Activated CD4-positive, alpha-beta T cell treated with anti-CD3 and anti-CD28 coated beads for 36 hours (primary cell): ENCODE measurements at regions of chr1 and their contacts with region 1.

Region 1: GRCh38 chr1:32107742-32108661 is at the start of gene KPNA6:
- DNase-seq: peak; percentile 94
- ATAC-seq: peak; percentile 77
- H3K4me3 Mint-ChIP-seq: peak within 1 kb of the TSS; percentile 88
- H3K27ac Mint-ChIP-seq: peak within 1 kb of the TSS; percentile 96
- H3K4me1 Mint-ChIP-seq: peaks cover 39% of the 10 kb centered on the region
- H3K27me3 Mint-ChIP-seq: no peaks in the 10 kb centered on the region
- total RNA-seq, gene KPNA6: 70.0 to 78.3 TPM

Region 2: GRCh38 chr1:32040711-32041110 is 67.3 kb before region 1 on chr1:
- CTCF ChIA-PET with region 1: interaction called, 3 read pairs
- POLR2A ChIA-PET with region 1: no interaction called
- intact Hi-C with region 1: loop called in 1 of 2 experiments (anchors 10 kb)
- DNase-seq: no peak
- ATAC-seq: no peak
- H3K4me3 Mint-ChIP-seq: no peak overlapping the region
- H3K27ac Mint-ChIP-seq: no peak overlapping the region
- H3K4me1 Mint-ChIP-seq: peaks cover 2% of the 10 kb centered on the region
- H3K27me3 Mint-ChIP-seq: no peaks in the 10 kb centered on the region

Region 3: DNA sequence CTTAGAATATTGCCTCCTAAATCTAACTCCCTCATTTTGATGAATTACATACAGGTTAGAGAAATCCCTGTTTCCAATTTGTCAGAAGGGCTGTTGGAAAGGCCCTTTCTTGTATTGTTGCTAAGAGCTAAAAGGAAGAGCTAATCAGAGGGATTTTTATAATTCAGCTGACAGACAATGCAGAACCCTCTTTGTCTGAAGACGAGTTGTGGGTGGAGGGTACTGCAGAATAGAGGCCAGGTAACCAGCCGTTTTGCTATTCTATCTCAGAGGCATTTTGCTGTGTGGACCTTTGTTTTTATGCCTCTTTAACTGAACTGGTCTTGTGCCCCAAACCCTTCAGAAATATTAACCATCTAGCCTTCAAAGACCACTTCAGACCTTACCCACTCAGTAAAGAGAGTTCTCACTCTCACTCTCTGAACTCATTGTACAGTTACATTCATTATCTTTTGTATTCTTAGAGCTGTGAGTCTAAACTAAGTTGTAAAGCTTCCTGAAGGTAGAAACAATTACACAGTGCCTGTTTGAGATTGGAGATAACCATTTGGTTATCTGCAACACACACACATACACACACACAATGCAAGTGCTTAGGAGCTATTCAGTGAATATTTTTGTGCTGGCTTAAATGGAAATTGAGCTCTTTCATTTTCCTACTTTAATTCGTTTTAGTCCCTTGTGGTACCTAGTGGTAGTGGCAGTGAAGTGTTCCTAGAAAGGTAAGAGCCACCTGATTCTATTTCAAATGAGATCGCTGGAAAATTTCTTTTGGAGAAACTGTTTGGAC is 19.6 kb after region 1 on chr1:
- CTCF ChIA-PET with region 1: interaction called, 62 read pairs
- POLR2A ChIA-PET with region 1: interaction called, 6 read pairs
- intact Hi-C with region 1: no loop called
- DNase-seq: no peak
- ATAC-seq: no peak
- H3K4me3 Mint-ChIP-seq: no peak overlapping the region
- H3K27ac Mint-ChIP-seq: peak overlapping the region; percentile 33
- H3K4me1 Mint-ChIP-seq: peaks cover 41% of the 10 kb centered on the region
- H3K27me3 Mint-ChIP-seq: no peaks in the 10 kb centered on the region

Region 4: GRCh38 chr1:32200226-32201010 is 92.4 kb after region 1 on chr1 and contains the start of gene CCDC28B:
- CTCF ChIA-PET with region 1: interaction called, 6 read pairs
- POLR2A ChIA-PET with region 1: no interaction called
- intact Hi-C with region 1: loop called in 1 of 2 experiments (anchors 5 kb)
- DNase-seq: peak; percentile 77
- ATAC-seq: peak; percentile 53
- H3K4me3 Mint-ChIP-seq: peak within 1 kb of the TSS; percentile 71
- H3K27ac Mint-ChIP-seq: peak within 1 kb of the TSS; percentile 86
- H3K4me1 Mint-ChIP-seq: peaks cover 57% of the 10 kb centered on the region
- H3K27me3 Mint-ChIP-seq: no peaks in the 10 kb centered on the region
- total RNA-seq, gene CCDC28B: 13.0 to 19.3 TPM

Region 5: GRCh38 chr1:32400876-32401631 is 293.1 kb after region 1 on chr1:
- CTCF ChIA-PET with region 1: no interaction called
- POLR2A ChIA-PET with region 1: no interaction called
- intact Hi-C with region 1: loop called in 1 of 2 experiments (anchors 10 kb)
- DNase-seq: peak; percentile 77
- ATAC-seq: peak; percentile 85
- H3K4me3 Mint-ChIP-seq: no peak overlapping the region
- H3K27ac Mint-ChIP-seq: no peak overlapping the region
- H3K4me1 Mint-ChIP-seq: peaks cover 2% of the 10 kb centered on the region
- H3K27me3 Mint-ChIP-seq: no peaks in the 10 kb centered on the region